ENCODE measurements at regions of chr17 and their contacts with region 1.

Region 1: GRCh38 chr17:69327060-69327831 is at the start of gene ABCA5:
- DNase-seq: peak; percentile 91 to 95 (median 93)
- ATAC-seq: peak; percentile 98
- H3K4me3 ChIP-seq: peak within 1 kb of the TSS; percentile 61
- H3K4me1 ChIP-seq: peaks cover 6% of the 10 kb centered on the region
- CTCF ChIP-seq: no peak
- total RNA-seq, gene ABCA5: 46.2 to 100 (median 52.7) TPM

Region 2: GRCh38 chr17:69246726-69247375 is 80.4 kb before region 1 on chr17:
- intact Hi-C with region 1: no loop called
- DNase-seq: no peak
- ATAC-seq: peak; percentile 55
- H3K4me3 ChIP-seq: no peak overlapping the region
- H3K4me1 ChIP-seq: no peaks in the 10 kb centered on the region
- CTCF ChIP-seq: no peak

Region 3: DNA sequence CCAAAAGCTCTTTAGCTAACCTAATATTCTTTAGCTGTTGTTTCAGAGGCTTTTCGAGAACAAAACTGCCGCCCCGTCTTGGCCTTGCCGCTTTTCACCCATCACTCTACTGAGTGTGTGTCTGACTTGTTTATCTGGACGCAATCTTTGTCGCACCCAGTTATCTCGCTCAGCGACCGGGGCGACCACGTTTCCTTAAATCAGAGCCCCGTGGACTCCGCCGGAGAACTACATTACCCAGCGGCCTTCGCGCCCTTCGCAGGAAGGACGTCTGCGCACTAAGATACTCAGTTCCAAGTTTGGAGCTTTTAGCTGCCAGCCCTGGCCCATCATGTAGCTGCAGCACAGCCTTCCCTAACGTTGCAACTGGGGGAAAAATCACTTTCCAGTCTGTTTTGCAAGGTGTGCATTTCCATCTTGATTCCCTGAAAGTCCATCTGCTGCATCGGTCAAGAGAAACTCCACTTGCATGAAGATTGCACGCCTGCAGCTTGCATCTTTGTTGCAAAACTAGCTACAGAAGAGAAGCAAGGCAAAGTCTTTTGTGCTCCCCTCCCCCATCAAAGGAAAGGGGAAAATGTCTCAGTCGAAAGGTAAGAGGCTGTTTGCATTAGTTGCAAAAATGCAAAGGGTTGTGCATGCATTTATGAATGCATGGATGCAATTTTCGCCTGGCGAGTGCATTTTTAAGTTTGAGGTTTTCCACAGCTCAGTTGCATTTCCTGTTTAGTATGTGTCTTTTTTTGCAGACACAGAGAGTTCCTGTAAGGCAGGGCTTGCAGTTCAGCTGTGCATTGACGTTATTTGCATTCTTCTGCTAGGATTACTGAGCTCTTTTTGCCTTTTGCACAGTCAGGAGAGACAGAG is 87.4 kb after region 1 on chr17 and contains the start of gene MAP2K6:
- intact Hi-C with region 1: loop called in 1 of 2 experiments (anchors 5 kb)
- DNase-seq: peak; percentile 89 to 92 (median 92)
- ATAC-seq: peak; percentile 94
- H3K4me3 ChIP-seq: peak within 1 kb of the TSS; percentile 25
- H3K4me1 ChIP-seq: peaks cover 31% of the 10 kb centered on the region
- CTCF ChIP-seq: no peak
- total RNA-seq, gene MAP2K6: 62.9 to 146 (median 117) TPM

Measured in mucosa of descending colon (tissue), 3 donors.